Psoas muscle (tissue), 8 donors: ENCODE measurements at regions of chr2 and their contacts with region 1.

Region 1: DNA sequence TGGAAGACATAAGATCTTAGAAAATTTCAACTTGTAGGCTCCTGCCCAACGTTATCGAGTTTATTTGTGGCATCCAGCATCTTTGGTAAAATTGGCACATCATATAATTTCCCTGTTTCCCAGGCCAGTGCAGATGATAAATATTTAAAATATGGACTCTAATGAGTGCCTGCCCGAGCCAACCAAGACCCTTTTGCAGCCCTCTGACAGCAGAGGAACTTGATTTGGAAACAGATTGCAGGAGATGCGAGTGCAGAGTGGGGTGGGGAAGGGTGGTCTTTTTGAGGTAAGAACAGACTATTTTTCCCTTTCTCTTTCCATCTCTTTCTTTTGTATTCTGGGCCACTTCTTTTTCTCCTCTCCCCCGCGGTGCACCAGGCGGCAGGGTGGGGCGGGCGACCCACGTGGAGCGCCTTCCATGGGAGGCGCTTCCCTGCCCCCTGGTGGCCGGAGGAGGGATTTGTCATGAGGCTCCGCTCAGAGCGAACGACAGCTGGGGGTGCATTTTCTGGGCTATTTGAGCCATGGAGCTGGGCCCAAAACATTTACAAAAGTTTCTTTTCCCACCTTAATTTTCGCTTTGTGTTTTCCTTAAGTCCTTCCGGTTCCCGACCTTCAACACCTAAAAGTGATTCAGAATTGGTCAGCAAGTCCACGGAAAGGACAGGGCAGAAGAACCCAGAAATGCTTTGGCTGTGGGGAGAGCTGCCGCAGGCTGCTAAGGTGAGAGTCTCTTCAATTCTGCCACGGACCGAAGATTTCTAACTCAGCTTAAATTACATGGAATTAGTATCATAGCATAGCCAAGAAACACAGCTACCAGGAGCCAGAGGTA is 32.7 kb downstream of the LPIN1 start:
- DNase-seq: peak; percentile 85 to 92
- ATAC-seq: peak; percentile 86 to 95 (median 88)
- H3K4me3 ChIP-seq: peak overlapping the region; percentile 12
- H3K27ac ChIP-seq: peak overlapping the region; percentile 65
- H3K4me1 ChIP-seq: peaks cover 36% of the 10 kb centered on the region
- H3K27me3 ChIP-seq: no peaks in the 10 kb centered on the region
- CTCF ChIP-seq: peak; percentile 99

Region 2: GRCh38 chr2:11688222-11689069 is 90.7 kb before region 1 on chr2:
- intact Hi-C with region 1: loop called (anchors 1 to 5 kb)
- DNase-seq: peak; percentile 90 to 93
- ATAC-seq: peak; percentile 80 to 86 (median 84)
- H3K4me3 ChIP-seq: peak overlapping the region; percentile 57
- H3K27ac ChIP-seq: peak overlapping the region; percentile 90
- H3K4me1 ChIP-seq: peaks cover 54% of the 10 kb centered on the region
- H3K27me3 ChIP-seq: no peaks in the 10 kb centered on the region
- CTCF ChIP-seq: peak; percentile 82

Region 3: GRCh38 chr2:11738589-11739436 is 40.3 kb before region 1 on chr2:
- intact Hi-C with region 1: loop called (anchors 2 to 5 kb)
- DNase-seq: peak; percentile 92 to 95
- ATAC-seq: peak; percentile 89 to 94 (median 90)
- H3K4me3 ChIP-seq: no peak overlapping the region
- H3K27ac ChIP-seq: peak overlapping the region; percentile 73
- H3K4me1 ChIP-seq: peaks cover 19% of the 10 kb centered on the region
- H3K27me3 ChIP-seq: no peaks in the 10 kb centered on the region
- CTCF ChIP-seq: peak; percentile 39

Region 4: DNA sequence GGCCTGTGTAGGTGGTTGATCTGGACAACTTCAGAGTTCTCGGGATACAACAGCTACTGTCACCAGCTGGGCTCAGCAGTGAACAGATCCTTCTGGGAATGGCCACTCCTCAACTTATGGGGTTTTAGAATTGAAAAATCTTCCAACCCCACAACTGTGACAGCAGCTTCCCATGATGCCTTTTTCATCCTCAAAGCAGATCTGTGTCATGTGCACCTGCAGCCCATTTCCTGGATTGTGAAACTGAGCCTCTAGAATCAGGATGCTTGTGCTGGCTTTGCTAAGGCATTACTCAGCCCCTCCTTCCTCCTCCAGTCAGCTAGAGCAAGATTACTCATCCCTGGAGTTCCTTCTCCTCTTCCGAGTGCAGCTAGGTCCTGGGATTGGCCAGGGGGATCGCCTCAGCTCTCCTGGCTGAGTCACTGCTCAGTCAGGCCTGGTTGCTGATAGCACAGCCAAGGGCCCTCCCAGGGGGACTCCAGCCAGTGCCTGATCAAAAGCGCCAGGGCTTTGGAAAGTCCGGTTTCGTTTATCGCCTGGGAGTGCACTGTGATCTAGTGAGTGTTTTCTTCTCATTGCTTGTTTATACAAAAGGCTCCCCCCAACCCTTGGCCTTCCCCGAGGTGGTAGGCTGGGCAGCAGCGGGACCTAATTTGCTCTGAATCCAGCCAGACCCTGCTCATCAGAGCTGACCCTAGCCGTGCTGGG is 35.1 kb before region 1 on chr2:
- intact Hi-C with region 1: loop called (anchors 2 to 5 kb)
- DNase-seq: peak; percentile 96 to 98
- ATAC-seq: peak; percentile 86 to 90 (median 88)
- H3K4me3 ChIP-seq: peak overlapping the region; percentile 54
- H3K27ac ChIP-seq: peak overlapping the region; percentile 92
- H3K4me1 ChIP-seq: peaks cover 47% of the 10 kb centered on the region
- H3K27me3 ChIP-seq: no peaks in the 10 kb centered on the region
- CTCF ChIP-seq: no peak